ENCODE measurements at regions of chr22 and their contacts with region 1.

Region 1: DNA sequence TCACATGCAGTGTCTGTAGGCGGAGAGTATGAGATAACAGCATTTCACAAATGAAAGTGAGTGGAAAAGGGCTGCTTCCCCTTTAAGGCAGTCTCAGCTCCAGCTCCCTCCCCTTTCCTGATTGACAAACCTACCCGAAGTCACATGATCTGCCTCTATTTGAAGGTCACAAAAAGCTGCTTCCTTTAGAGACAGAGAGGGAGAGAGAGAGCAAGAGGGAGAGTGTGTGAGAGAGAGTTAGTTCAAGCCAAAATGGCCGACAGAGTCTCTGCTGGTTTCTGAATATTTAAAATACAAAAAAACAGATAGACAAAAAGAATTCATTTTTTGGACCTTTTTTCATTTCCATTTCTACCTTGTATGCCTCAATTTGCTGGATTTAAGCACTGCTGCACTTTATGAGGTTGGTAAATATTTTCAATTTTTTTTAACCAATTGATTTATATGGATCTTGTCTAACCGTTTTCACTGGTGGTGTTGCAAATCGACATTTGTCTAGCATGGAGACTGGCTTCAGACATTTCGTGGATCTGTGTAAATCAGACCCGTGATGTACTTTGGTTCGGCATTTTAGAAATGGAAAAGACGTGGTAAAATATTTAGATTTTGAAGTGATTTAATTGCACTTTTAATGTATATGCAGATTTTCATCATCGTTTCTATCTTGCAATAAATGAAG is at the start of gene TNRC6B:
- DNase-seq: peak; percentile 84
- H3K4me3 Mint-ChIP-seq: peak within 1 kb of the TSS; percentile 89
- H3K27ac Mint-ChIP-seq: peak within 1 kb of the TSS; percentile 92
- H3K4me1 Mint-ChIP-seq: peaks cover 54% of the 10 kb centered on the region
- H3K27me3 Mint-ChIP-seq: no peaks in the 10 kb centered on the region
- total RNA-seq, gene TNRC6B: 34.9 to 38.8 TPM

Region 2: DNA sequence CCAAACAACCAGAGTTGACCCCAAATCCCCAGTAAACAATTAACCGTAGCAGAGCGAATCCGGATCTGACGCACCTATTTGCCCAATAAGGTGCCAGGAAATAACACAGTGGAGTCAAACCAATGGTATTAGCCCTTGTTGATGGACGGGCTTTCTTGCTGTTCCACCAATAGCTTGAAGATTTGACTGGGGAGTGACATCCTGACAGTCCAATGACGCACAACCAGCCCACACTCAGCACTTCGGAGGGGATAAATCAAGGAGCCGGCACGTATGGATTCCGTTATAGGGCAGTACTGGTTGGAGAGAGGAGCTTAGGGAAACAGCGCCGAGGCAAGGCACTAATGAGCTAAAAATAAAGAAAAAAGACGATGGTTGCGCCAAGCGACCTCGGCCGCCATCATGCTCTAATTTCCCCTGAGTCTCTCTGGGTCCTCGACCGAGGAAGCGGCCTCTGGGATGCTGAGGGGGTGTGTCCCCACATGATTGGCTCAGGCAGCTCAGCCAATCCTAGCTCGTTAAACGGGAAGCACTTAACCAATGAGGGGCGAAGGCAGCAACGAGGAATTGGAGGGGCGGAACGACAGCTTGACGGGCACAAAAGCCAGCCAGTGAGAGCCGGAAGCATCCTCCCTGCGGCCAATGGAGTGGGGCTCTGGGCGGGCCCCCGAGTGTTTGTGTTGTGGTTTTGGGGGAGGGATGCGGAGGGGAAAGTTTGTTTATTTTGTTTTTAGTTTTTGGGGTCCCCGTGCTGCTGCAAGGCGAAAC is 133.6 kb before region 1 on chr22:
- CTCF ChIA-PET with region 1: interaction called, 15 read pairs
- POLR2A ChIA-PET with region 1: interaction called, 32 read pairs
- intact Hi-C with region 1: loop called (anchors 1 kb)
- DNase-seq: peak; percentile 99
- H3K4me3 Mint-ChIP-seq: peak overlapping the region; percentile 93
- H3K27ac Mint-ChIP-seq: peak overlapping the region; percentile 99
- H3K4me1 Mint-ChIP-seq: peaks cover 27% of the 10 kb centered on the region
- H3K27me3 Mint-ChIP-seq: peaks cover 6% of the 10 kb centered on the region

Region 3: DNA sequence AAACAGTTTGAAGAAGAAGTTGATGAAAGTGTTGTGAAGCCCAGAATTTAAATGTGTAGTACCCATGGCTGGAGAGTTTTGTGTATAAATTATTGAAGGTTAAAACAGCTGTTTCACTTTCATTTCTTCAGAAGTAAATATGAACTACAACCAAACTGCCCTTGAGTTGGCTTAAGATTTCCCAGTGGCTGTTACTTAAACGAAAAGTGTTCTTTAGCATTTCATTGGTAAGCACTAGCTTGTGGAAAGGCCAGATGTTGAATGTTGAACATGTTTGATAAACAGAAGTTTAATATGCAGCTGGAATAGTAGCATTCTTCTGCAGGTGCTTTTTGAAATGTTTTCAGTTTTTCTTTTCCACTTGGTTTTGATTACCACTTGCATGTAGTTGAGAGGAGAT is 83.4 kb before region 1 on chr22:
- CTCF ChIA-PET with region 1: no interaction called
- POLR2A ChIA-PET with region 1: no interaction called
- intact Hi-C with region 1: loop called (anchors 2 kb)
- DNase-seq: no peak
- H3K4me3 Mint-ChIP-seq: peak overlapping the region; percentile 65
- H3K27ac Mint-ChIP-seq: peak overlapping the region; percentile 80
- H3K4me1 Mint-ChIP-seq: peaks cover 64% of the 10 kb centered on the region
- H3K27me3 Mint-ChIP-seq: no peaks in the 10 kb centered on the region

Region 4: GRCh38 chr22:40196628-40197360 is 18.9 kb after region 1 on chr22:
- CTCF ChIA-PET with region 1: interaction called, 9 read pairs
- POLR2A ChIA-PET with region 1: interaction called, 32 read pairs
- intact Hi-C with region 1: loop called (anchors 1 kb)
- DNase-seq: peak; percentile 78
- H3K4me3 Mint-ChIP-seq: peak overlapping the region; percentile 53
- H3K27ac Mint-ChIP-seq: peak overlapping the region; percentile 90
- H3K4me1 Mint-ChIP-seq: peaks cover 78% of the 10 kb centered on the region
- H3K27me3 Mint-ChIP-seq: no peaks in the 10 kb centered on the region

Region 5: GRCh38 chr22:40238425-40239344 is 60.8 kb after region 1 on chr22:
- CTCF ChIA-PET with region 1: no interaction called
- POLR2A ChIA-PET with region 1: interaction called, 3 read pairs
- intact Hi-C with region 1: loop called (anchors 2 kb)
- DNase-seq: peak; percentile 59
- H3K4me3 Mint-ChIP-seq: peak overlapping the region; percentile 2
- H3K27ac Mint-ChIP-seq: peak overlapping the region; percentile 59
- H3K4me1 Mint-ChIP-seq: peaks cover 81% of the 10 kb centered on the region
- H3K27me3 Mint-ChIP-seq: no peaks in the 10 kb centered on the region

Region 6: GRCh38 chr22:40326905-40327735 is 149.2 kb after region 1 on chr22:
- CTCF ChIA-PET with region 1: interaction called, 3 read pairs
- POLR2A ChIA-PET with region 1: no interaction called
- intact Hi-C with region 1: loop called (anchors 2 kb)
- DNase-seq: no peak
- H3K4me3 Mint-ChIP-seq: no peak overlapping the region
- H3K27ac Mint-ChIP-seq: peak overlapping the region; percentile 77
- H3K4me1 Mint-ChIP-seq: peaks cover 94% of the 10 kb centered on the region
- H3K27me3 Mint-ChIP-seq: no peaks in the 10 kb centered on the region